Activated T-helper 1 cell treated with anti-CD3 and anti-CD28 coated beads, Interleukin-12 subunit alpha, Interleukin-12 subunit beta, Interleukin-2, Interleukin-4 antibody, amounts not matched to agents 30 ng/mL and 10 ng/mL and 1 ng/mL, durations not matched to agents 14 hours and 24 hours and 36 hours (primary cell): ENCODE measurements at regions of chrX and their contacts with region 1.

Region 1: GRCh38 chrX:131987252-131987651 is 35.9 kb upstream of the STK26 start:
- DNase-seq: peak; percentile 2
- H3K4me3 Mint-ChIP-seq: peak overlapping the region; percentile 68
- H3K27ac Mint-ChIP-seq: peak overlapping the region; percentile 91
- H3K4me1 Mint-ChIP-seq: peaks cover 30% of the 10 kb centered on the region
- H3K27me3 Mint-ChIP-seq: no peaks in the 10 kb centered on the region

Region 2: GRCh38 chrX:132017431-132018185 is 30.4 kb after region 1 on chrX:
- intact Hi-C with region 1: loop called (anchors 2 kb)
- DNase-seq: no peak
- H3K4me3 Mint-ChIP-seq: peak overlapping the region; percentile 7
- H3K27ac Mint-ChIP-seq: peak overlapping the region; percentile 68
- H3K4me1 Mint-ChIP-seq: peaks cover 38% of the 10 kb centered on the region
- H3K27me3 Mint-ChIP-seq: no peaks in the 10 kb centered on the region

Region 3: DNA sequence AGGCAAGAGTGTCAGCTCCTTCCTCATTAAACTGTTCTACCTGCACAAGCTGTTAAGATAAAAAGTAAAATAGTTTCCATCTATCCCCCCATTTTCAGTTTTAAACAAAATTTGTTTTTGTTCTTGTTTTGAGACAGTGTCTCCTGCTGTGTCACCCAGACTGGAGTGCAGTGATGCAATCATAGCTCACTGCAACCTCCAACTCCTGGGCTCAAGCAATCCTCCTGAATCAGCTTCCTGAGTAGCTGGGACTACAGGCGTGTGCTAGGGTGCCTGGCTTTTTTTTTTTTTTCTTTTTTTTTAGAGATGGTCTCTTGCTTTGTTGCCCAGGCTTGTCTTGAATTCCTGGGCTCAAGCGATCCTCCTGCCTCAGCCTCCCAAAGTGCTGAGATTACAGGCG is 865.8 kb after region 1 on chrX:
- intact Hi-C with region 1: no loop called
- DNase-seq: no peak
- H3K4me3 Mint-ChIP-seq: no peak overlapping the region
- H3K27ac Mint-ChIP-seq: no peak overlapping the region
- H3K4me1 Mint-ChIP-seq: peaks cover 12% of the 10 kb centered on the region
- H3K27me3 Mint-ChIP-seq: peaks cover 13% of the 10 kb centered on the region